MCF 10A (cell line): ENCODE measurements at regions of chr19 and their contacts with region 1.

Region 1: GRCh38 chr19:16572332-16573211 is at the start of gene SLC35E1:
- DNase-seq: peak; percentile 98
- H3K4me3 Mint-ChIP-seq: peak within 1 kb of the TSS; percentile 99
- H3K27ac Mint-ChIP-seq: peak within 1 kb of the TSS; percentile 99
- H3K4me1 Mint-ChIP-seq: peaks cover 37% of the 10 kb centered on the region
- H3K27me3 Mint-ChIP-seq: no peaks in the 10 kb centered on the region
- CTCF ChIP-seq: no peak
- total RNA-seq, gene SLC35E1: 62.2 and 62.6 TPM in 2 replicates

Region 2: GRCh38 chr19:16542045-16542909 is 30.3 kb before region 1 on chr19 and contains the start of gene CHERP:
- CTCF ChIA-PET with region 1: interaction called, 3 read pairs
- POLR2A ChIA-PET with region 1: interaction called, 11 read pairs
- intact Hi-C with region 1: no loop called
- DNase-seq: peak; percentile 94
- H3K4me3 Mint-ChIP-seq: peak within 1 kb of the TSS; percentile 81
- H3K27ac Mint-ChIP-seq: peak within 1 kb of the TSS; percentile 63
- H3K4me1 Mint-ChIP-seq: peaks cover 9% of the 10 kb centered on the region
- H3K27me3 Mint-ChIP-seq: no peaks in the 10 kb centered on the region
- CTCF ChIP-seq: no peak
- total RNA-seq, gene CHERP: 45.6 and 51.6 TPM in 2 replicates

Region 3: DNA sequence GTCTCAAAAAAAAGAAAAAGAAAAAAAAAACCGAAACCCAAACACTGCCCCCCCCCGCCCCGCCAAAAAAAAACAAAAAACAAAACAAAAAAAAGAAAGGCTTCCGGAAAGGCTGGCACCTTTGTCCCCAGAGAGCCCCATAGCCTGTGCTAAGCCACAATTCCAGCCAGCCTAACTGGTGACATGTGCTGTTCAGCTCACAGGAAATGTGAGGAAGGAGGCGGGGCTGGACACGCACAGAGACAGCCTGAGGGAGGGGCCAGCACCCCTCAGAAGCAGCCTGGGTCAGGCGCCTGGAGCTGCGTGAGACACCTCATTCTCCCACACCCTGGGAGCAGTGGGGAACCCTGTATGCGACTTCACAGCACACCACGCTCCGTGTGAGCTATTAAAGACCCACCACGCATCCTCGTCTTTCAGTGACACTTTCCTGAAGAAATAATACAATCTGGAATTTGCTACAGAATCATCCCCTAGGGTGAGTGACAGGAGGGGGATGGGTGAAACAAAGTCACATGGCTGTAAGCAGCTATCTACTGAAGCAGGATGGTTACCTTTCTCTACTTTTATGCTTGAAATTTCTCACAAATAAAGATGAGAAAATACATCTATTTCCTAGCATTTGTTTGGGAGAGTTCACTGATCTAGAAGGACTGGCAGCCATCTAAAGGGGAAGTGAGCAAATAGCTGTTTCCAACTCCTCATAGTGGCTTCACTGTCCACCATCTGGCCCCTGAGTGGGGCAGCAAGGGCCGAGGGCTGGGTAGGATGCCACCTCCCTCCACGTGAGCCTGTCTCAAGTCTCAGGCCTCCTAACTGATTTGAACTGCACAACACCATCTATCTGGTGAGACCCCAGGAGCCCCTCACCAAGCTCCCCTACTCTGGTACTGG is 11.9 kb after region 1 on chr19:
- CTCF ChIA-PET with region 1: interaction called, 5 read pairs
- POLR2A ChIA-PET with region 1: interaction called, 51 read pairs
- intact Hi-C with region 1: no loop called
- DNase-seq: peak; percentile 84
- H3K4me3 Mint-ChIP-seq: peak overlapping the region; percentile 47
- H3K27ac Mint-ChIP-seq: peak overlapping the region; percentile 78
- H3K4me1 Mint-ChIP-seq: peaks cover 38% of the 10 kb centered on the region
- H3K27me3 Mint-ChIP-seq: no peaks in the 10 kb centered on the region
- CTCF ChIP-seq: no peak

Region 4: DNA sequence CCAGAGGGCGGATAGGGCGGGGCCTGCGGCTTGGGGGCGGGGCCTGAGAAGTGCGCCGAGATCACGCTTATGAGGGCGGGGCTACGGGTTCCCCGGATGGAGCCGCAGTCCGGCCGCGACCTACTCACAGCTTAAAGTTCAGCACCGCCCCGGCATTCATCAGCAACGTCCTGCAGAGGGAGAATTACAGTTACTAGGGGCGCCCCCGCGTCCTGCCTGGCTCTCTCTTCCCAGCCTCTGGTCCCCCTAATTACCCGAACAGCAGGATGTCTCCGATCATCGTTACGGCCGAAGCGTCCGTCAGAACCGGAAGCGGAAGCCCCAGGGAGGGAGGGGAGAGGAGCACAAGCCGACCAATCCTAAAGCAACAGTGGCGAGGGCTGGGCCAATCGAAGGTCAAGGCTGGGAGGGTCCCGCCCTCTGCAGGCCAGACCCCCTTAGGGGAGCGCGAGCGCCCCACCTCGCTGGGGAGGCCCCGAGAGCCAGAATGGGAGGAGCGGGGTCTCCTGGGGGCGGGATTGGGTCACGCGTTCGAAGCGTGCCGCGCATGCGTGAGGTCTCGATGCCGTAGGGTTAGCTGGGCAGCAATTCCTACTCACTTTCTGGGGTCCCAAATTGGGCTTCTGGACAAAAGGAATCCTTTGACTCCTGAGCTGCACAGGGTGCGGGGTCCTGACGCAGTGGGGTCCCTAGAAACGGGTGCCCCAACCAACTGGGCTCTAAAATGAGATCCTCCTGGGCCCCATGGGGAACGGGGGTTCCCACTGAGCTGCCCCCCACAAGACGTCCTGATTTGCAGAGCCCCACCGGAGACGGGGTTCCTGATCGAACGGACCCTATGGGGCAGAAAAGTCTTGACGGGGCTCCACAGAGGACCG is 87.5 kb after region 1 on chr19 and contains the start of gene SMIM7:
- CTCF ChIA-PET with region 1: interaction called, 3 read pairs
- POLR2A ChIA-PET with region 1: interaction called, 15 read pairs
- intact Hi-C with region 1: no loop called
- DNase-seq: peak; percentile 99
- H3K4me3 Mint-ChIP-seq: peak within 1 kb of the TSS; percentile 95
- H3K27ac Mint-ChIP-seq: peak within 1 kb of the TSS; percentile 94
- H3K4me1 Mint-ChIP-seq: peaks cover 7% of the 10 kb centered on the region
- H3K27me3 Mint-ChIP-seq: no peaks in the 10 kb centered on the region
- CTCF ChIP-seq: no peak
- total RNA-seq, gene SMIM7: 69.3 and 81.8 TPM in 2 replicates

Region 5: DNA sequence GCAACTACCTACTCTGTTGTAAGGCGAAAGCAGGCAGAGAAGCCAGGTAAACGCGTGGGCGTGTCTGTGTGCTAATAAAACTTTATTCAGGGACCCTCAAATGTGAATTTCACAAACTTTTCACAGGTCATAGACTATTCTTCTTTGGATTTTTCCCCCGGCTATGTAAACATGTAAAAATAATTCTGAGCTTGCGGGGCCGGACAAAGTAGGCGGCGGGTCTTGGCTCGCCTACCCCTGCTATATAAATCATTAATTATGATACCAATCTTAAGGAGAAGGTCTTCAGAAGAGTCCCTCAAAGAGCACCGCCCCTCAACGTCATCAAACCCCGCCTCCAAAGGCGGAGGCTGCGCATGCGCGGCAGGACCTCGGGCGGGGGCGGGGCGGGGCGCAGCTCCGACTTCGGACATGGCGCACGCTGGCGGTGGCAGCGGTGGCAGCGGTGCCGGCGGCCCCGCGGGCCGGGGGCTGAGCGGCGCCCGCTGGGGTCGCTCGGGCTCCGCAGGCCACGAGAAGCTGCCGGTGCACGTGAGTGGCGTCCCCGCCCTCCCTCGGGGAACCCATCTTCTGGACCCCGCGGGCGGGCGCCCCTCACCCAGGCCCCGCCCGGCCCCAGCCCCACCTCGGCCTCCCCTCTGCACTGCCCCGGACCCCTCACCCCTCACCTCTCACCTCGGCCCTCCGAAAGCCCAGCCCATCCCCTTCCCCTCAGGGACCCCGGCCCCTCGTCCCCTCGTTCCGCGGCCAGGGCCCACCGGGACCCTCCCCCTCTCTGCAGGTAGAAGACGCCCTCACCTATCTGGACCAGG is 256.6 kb after region 1 on chr19 and contains the start of gene SIN3B:
- CTCF ChIA-PET with region 1: no interaction called
- POLR2A ChIA-PET with region 1: no interaction called
- intact Hi-C with region 1: loop called (anchors 5 kb)
- DNase-seq: peak; percentile 94
- H3K4me3 Mint-ChIP-seq: peak within 1 kb of the TSS; percentile 75
- H3K27ac Mint-ChIP-seq: peak within 1 kb of the TSS; percentile 59
- H3K4me1 Mint-ChIP-seq: peaks cover 17% of the 10 kb centered on the region
- H3K27me3 Mint-ChIP-seq: no peaks in the 10 kb centered on the region
- CTCF ChIP-seq: no peak
- total RNA-seq, gene SIN3B: 56.0 and 66.6 TPM in 2 replicates